ENCODE measurements at regions of chr11 and their contacts with region 1.

Region 1: DNA sequence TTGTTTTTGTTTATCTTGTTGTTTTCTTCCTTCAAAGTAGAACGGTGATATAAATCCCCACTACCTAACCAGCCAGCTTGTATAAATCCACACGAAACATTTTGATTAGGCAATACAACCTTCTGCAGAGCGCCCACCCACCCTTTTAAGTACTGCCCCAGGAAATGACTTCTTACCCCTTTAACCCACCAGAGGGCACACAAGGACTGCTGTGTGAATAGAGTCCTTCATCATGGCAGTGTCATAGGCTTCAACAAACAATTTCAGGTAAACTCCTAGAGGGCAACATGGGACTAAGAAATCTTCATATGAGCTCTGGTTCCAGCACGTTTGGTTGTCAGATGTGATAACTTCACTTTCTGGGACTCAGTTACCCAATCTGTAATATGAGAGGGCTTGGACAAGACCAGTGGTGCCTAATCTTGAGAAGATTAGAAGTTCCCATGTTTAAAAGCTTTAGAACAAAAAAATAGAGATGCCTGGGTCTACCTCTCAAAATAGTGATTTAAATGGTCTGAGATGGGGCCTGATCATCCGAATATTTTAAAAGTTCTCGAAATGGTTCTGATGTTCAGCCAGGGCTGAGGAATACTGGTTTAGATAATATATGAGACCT is 56.1 kb downstream of the PIWIL4 start:
- DNase-seq: peak; percentile 74
- H3K4me3 ChIP-seq: no peak overlapping the region
- H3K27ac ChIP-seq: no peak overlapping the region
- H3K4me1 ChIP-seq: no peaks in the 10 kb centered on the region
- H3K27me3 ChIP-seq: no peaks in the 10 kb centered on the region

Region 2: DNA sequence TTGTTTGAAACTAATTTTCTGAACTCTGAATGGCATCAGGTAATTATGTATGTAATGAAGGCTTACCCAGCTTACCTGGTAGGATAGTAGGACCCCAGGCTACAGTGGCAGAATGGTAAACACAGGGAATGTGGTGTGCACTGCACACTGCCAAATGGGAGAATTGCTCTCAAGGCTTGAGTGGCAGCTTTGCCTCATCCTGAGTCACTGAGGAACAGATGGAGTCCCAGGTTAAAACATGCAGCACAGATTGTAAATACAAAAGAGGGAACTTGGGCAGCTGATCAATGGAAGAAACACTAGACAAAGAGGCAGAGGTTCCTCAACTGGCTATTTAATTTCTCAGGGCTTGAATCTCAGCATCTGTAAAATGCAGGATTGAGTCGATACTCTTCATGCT is 246.4 kb before region 1 on chr11:
- in situ Hi-C with region 1: no loop called
- DNase-seq: no peak
- H3K4me3 ChIP-seq: no peak overlapping the region
- H3K27ac ChIP-seq: no peak overlapping the region
- H3K4me1 ChIP-seq: no peaks in the 10 kb centered on the region
- H3K27me3 ChIP-seq: no peaks in the 10 kb centered on the region; the same call in 1 of the 2 replicates

Region 3: DNA sequence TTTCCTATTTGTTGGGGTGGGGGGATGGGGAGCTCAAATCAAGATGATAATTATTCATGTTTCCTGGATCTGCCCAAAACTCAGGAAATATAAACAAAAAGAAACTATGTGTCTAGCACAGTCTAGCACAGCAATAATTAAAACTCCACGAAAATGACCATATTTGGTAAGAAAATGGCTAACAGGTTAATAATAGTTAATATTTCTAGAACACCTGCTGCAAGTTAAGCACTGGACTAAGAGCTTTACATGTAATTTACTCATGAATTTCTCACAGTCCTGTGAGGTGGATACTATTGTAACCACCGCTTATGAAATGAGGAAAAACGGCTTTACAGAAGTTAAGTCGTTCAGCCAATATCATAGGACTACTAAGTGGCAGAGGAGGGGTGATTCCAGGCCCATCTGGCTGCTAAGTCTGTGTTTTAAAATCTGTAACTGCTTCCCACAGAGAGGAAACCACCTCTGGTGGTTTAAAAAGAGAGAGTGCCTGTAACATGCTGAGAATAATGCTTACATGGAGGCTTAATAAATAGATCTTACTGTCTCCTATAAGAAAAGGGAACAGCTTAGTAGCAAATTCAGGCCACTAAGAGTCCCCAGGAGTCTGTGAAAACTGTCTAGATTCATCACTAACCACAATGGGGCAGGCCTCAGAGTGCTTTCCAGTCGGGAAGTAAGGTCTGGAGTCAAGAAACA is 134.0 kb after region 1 on chr11:
- in situ Hi-C with region 1: loop called (anchors 10 kb)
- DNase-seq: no peak
- H3K4me3 ChIP-seq: no peak overlapping the region
- H3K27ac ChIP-seq: no peak overlapping the region
- H3K4me1 ChIP-seq: peaks cover 11% of the 10 kb centered on the region
- H3K27me3 ChIP-seq: no peaks in the 10 kb centered on the region

Region 4: DNA sequence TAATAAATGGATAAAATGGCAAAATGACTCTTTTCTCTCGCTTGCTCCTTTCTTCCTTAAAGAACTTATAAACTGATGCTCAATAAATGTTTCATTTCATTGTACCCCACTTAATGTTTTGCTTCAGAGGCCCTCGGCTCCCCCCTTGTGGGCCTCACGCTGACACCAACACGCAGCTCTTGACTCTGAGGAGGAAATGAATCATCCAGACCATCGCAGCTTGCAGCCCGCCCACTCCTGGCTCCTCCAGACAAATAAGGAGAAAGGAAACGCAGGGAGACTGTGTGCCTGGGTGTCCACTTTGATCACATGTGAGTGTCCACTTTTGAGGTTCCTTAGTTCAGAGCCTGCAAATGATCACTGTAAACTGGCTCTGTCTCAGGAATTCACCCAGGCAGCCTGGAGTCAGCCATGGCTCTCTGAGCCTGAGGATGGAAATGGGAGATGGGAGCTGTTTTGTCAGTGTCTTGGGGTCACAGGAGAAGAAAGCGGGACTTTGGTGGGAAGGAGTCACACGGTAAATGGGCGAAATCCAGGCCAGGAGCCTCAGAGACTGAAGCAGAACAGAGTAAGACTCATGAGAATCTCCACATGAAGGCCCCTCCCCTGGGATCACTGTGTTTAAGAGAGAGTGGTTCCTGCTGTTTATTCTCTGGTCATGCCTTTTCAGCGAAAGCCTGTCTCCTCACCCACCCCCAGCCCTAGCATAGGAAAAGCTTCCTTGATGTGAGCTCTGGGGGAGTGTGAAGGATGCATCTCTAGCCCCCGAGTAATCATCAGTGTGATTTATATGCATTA is 253.6 kb after region 1 on chr11:
- in situ Hi-C with region 1: loop called (anchors 10 kb)
- DNase-seq: peak; percentile 98
- H3K4me3 ChIP-seq: no peak overlapping the region
- H3K27ac ChIP-seq: peak overlapping the region; percentile 91
- H3K4me1 ChIP-seq: peaks cover 26% of the 10 kb centered on the region
- H3K27me3 ChIP-seq: no peaks in the 10 kb centered on the region

Measured in GM23248 (cell line).